Activated naive CD4-positive, alpha-beta T cell treated with anti-CD3 and anti-CD28 coated beads for 36 hours (primary cell): ENCODE measurements at regions of chr16 and their contacts with region 1.

Region 1: GRCh38 chr16:88706288-88706964 is at the starts of genes CTU2 and RNF166:
- DNase-seq: peak; percentile 92
- H3K4me3 Mint-ChIP-seq: peak within 1 kb of the TSS; percentile 84
- H3K27ac Mint-ChIP-seq: peak within 1 kb of the TSS; percentile 77
- H3K4me1 Mint-ChIP-seq: peaks cover 60% of the 10 kb centered on the region
- H3K27me3 Mint-ChIP-seq: no peaks in the 10 kb centered on the region
- total RNA-seq, gene CTU2: 46.1 to 48.1 TPM
- total RNA-seq, gene RNF166: 33.6 to 35.3 TPM

Region 2: DNA sequence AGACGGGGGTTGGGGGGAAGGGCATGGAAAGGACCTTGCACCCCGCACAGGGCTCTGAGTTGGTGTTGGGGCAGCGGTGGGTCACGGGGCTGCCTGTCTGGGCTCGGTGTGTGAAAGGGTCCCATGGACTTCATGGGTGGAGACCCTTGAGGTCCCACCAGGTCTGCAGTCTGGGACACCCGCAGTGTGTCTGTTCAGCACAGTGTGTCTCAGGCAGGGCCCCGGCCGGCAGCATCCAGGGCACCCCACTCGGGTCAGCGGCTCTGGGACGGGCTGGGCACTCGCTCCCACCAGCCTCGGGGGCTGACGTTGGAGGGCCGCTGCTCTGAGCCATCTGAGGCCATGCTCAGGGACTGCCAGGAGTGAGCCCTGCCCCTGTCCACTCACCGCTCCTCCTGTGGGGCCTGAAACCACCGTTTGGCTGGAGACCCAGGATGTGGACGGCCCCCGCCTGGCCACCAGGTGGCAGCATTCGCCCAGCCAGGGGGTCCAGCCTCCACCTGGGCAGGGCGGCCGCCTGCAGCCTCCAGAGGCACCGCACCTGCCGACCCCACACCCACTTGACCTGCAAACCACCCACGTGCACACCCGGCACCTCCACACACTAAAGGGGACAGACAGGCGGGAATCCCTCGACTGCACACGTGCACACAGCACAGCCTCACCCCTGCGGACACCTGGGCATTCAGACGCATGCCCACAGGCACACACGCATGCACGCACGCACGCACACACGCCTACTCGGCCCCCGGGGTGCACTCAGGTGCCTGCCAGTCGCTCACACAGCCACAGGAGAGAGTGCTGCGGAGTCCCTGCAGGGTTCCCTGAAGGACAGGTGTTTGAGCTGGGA is 263.5 kb before region 1 on chr16:
- CTCF ChIA-PET with region 1: no interaction called
- intact Hi-C with region 1: no loop called
- DNase-seq: peak; percentile 83
- H3K4me3 Mint-ChIP-seq: no peak overlapping the region
- H3K27ac Mint-ChIP-seq: no peak overlapping the region
- H3K4me1 Mint-ChIP-seq: no peaks in the 10 kb centered on the region
- H3K27me3 Mint-ChIP-seq: no peaks in the 10 kb centered on the region

Region 3: DNA sequence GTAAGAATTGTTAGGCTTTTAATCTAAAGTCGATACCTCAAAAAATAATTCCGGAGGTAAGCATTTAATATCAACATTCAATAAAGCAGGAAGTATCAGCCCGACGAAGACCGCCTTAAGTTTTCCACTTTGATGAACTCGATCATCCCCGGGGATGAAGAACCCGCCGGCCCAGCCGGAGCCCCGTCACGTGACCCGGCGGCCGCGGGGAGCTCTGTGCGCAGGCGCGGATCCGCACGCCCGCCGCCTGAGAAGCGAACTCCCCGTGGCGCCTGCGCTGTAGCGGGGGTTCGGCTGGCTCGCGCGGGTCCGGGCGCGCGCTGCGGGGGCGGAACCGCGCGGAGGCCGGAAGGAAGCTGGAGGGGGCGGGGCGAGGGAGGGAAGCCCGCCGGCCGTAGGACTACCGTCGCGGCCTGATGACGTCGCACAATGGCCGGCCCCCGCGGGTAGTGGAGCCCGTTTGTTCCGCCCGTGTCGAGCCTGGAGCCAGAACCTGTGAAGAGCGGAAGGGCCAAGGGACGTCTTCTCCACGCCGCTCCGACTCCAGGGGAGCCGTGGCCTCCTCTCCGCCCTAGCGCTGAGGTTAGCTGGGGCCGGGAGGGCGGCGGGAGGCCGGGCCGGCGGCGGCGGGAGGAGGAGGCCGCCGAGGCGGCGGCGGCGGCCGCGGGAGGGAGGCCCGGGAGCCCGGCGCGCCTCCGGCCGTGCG is 136.3 kb before region 1 on chr16 and contains the start of gene ZC3H18:
- CTCF ChIA-PET with region 1: no interaction called
- intact Hi-C with region 1: loop called (anchors 1 kb)
- DNase-seq: peak; percentile 97
- H3K4me3 Mint-ChIP-seq: peak within 1 kb of the TSS; percentile 81
- H3K27ac Mint-ChIP-seq: peak within 1 kb of the TSS; percentile 84
- H3K4me1 Mint-ChIP-seq: peaks cover 41% of the 10 kb centered on the region
- H3K27me3 Mint-ChIP-seq: no peaks in the 10 kb centered on the region
- total RNA-seq, gene ZC3H18: 55.8 to 58.5 TPM

Region 4: GRCh38 chr16:88599825-88600538 is 106.4 kb before region 1 on chr16:
- CTCF ChIA-PET with region 1: no interaction called
- intact Hi-C with region 1: no loop called
- DNase-seq: no peak
- H3K4me3 Mint-ChIP-seq: no peak overlapping the region
- H3K27ac Mint-ChIP-seq: no peak overlapping the region
- H3K4me1 Mint-ChIP-seq: peaks cover 9% of the 10 kb centered on the region
- H3K27me3 Mint-ChIP-seq: no peaks in the 10 kb centered on the region

Region 5: DNA sequence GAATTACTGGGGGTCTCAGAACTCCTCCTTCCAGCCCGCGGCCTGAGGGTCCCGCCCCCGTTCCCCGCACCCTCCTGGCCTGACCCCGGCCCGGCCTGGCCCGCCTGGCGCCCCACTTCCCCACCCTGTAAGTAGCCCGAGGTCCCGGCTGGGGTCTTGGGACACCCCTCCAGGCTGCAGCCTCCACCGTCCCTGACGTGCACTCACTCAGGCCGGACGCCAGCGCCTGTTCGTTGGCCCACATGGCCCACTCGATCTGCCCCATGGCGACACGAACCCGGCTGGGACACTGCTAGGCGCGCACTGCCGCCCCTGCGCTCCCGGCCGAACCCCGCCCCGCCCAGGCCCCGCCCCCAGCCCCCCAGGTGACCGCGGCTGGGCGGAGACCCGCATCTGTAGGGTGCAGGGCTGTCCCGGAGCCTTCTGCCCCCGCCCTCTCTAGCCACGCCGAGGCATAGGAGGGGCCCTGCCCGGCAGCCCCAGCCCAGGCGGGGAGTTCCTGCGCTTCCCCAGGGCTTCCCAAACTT is 55.6 kb before region 1 on chr16 and contains the start of gene CYBA:
- CTCF ChIA-PET with region 1: no interaction called
- intact Hi-C with region 1: loop called (anchors 1 kb)
- DNase-seq: peak; percentile 91
- H3K4me3 Mint-ChIP-seq: peak within 1 kb of the TSS; percentile 87
- H3K27ac Mint-ChIP-seq: peak within 1 kb of the TSS; percentile 95
- H3K4me1 Mint-ChIP-seq: peaks cover 18% of the 10 kb centered on the region
- H3K27me3 Mint-ChIP-seq: no peaks in the 10 kb centered on the region
- total RNA-seq, gene CYBA: 167 to 180 TPM

Region 6: DNA sequence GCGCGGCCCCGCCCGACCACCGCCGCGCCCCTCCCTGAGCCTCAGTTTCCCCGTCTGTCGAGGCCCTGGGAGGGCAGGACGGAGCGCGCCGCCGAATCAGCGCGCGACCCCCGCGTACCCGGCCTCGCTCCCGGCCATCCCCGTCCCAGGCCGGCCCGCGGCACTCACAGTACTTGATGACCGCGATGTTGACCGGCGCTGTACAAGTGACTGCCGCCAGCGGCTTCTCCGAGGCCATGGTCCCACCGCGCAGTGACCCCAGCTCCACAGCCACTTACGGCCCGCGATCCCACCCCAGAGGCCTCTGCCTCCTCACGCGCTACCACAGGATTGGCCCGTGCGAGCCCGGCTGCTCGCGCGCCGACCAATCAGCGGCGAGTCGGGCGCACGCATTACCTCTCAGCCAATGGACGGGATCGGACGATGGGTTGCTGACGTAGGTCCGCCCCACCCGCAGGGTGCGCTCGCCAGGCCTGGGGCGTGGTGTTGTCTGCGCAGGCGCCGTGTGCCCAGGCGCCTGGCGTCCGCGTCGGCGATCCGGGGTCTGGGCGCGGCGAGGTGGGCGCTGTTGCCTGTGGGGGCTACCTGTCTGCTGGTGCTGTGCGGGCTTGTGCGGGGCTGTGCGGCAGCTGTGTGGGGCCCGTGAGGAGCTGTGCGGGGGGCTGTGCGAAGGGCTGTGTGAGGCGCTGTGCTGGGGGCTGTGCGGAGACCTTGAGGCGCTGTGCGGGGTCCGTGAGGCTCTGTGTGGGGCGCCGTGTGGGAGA is 43.4 kb before region 1 on chr16 and contains the start of gene MVD:
- CTCF ChIA-PET with region 1: no interaction called
- intact Hi-C with region 1: loop called (anchors 1 kb)
- DNase-seq: peak; percentile 97
- H3K4me3 Mint-ChIP-seq: peak within 1 kb of the TSS; percentile 90
- H3K27ac Mint-ChIP-seq: peak within 1 kb of the TSS; percentile 86
- H3K4me1 Mint-ChIP-seq: peaks cover 13% of the 10 kb centered on the region
- H3K27me3 Mint-ChIP-seq: no peaks in the 10 kb centered on the region
- total RNA-seq, gene MVD: 90.5 to 96.8 TPM

Region 7: GRCh38 chr16:88856828-88857733 is 150.7 kb after region 1 on chr16 and contains the starts of genes GALNS and TRAPPC2L:
- CTCF ChIA-PET with region 1: interaction called, 5 read pairs
- intact Hi-C with region 1: loop called (anchors 1 kb)
- DNase-seq: peak; percentile 99
- H3K4me3 Mint-ChIP-seq: peak within 1 kb of the TSS; percentile 88
- H3K27ac Mint-ChIP-seq: peak within 1 kb of the TSS; percentile 63
- H3K4me1 Mint-ChIP-seq: peaks cover 23% of the 10 kb centered on the region
- H3K27me3 Mint-ChIP-seq: no peaks in the 10 kb centered on the region
- total RNA-seq, gene GALNS: 10.9 to 11.2 TPM
- total RNA-seq, gene TRAPPC2L: 57.7 to 66.1 TPM

Region 8: DNA sequence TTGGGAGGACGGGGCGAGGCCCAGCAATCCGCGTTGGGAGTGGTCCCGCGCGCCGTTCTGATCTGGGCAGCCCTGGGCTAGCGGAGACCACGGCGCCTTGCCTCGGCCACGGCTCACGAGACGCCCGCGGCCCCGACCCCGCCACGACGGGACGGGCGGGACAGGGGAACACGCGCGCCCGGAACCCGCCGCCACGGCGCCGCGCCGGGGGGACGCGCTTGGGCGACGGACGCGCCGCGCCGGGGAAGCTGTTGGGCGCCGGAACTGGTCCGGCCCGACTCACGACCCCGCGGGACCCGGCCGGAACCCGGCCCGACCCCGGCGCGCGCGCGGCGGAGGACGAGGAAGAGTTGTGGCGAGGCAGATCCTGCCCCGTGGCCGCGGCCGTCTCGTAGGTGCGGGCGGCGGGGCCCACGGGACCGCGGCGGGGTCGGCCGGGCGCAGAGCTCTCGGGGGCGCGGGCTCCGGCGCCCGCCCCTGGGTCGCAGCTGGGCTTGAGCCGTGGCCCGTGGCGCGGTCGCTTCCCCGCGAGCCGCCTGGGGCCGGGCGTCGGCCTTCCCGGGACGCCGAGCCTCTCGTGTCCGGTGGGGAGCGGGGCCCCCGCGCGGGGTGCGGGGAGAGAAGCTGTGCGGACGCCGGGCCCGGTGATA is 387.3 kb after region 1 on chr16 and contains the start of gene ACSF3:
- CTCF ChIA-PET with region 1: no interaction called
- intact Hi-C with region 1: loop called (anchors 10 kb)
- DNase-seq: peak; percentile 63
- H3K4me3 Mint-ChIP-seq: peak within 1 kb of the TSS; percentile 92
- H3K27ac Mint-ChIP-seq: peak within 1 kb of the TSS; percentile 92
- H3K4me1 Mint-ChIP-seq: peaks cover 47% of the 10 kb centered on the region
- H3K27me3 Mint-ChIP-seq: no peaks in the 10 kb centered on the region
- total RNA-seq, gene ACSF3: 26.1 to 26.7 TPM

Region 9: DNA sequence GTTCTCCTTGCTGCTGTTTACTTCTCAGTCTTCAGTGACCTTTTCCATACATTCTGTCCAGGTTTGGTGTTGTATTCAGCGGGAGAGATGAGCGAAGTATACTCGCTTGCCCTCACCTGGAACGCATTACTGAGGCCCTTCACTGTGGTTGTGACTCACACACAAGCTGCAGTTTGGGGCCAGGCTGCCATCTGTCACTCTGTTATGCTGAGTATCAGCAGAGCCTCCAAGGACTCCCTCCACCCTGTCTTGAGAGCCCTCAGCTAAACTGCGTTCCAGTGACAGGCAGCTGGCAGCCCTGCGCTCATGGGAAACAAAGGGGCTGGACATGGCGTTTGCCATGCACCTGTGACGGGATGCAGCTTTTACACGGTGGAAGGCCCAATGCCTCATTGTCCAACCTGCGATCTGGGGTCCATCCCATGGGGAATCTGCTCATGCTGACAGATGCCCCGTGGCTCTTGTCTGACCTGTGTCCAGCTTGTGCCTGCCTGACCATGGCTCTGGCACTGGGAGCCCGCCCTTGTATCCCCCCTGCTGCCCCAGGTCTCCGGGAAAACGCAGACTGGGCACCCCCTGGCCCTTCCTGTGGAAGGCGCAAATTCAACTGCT is 504.6 kb after region 1 on chr16:
- CTCF ChIA-PET with region 1: no interaction called
- intact Hi-C with region 1: no loop called
- DNase-seq: no peak
- H3K4me3 Mint-ChIP-seq: no peak overlapping the region
- H3K27ac Mint-ChIP-seq: no peak overlapping the region
- H3K4me1 Mint-ChIP-seq: peaks cover 5% of the 10 kb centered on the region
- H3K27me3 Mint-ChIP-seq: peaks cover 5% of the 10 kb centered on the region